H1 (cell line): ENCODE measurements at regions of chr20 and their contacts with region 1.

Region 1: DNA sequence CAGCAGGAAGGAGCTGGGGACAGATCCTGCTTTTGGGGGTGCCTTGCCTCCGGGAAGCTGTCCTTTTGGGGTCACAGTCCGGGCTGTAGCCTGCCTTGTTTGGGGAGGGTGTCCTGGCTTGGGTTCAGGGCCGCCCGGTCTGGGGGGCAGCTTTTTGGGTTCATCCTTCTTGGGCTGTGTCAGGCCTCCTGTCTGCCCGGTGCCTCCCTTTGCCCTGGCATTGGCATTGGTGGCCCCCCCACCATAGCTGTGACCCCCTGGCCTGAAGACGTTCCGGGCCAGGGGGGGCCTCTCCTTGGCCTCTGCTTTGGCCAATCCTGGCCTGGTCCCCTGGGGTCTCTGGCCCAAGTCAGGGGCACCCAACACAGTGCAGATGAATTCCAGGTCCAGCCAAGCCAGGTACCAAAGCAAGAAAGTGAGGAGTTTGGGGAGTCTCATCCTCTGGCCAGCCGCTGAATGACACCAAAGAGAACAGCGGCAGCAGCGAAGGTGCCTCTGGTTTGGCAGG is 483 bp downstream of the GDF5 start:
- DNase-seq: no peak
- H3K4me3 ChIP-seq: no peak overlapping the region
- H3K27ac ChIP-seq: no peak overlapping the region
- H3K4me1 ChIP-seq: peaks cover 5 to 21% (median 12%) of the 10 kb centered on the region in 4 experiments
- H3K27me3 ChIP-seq: no peaks in the 10 kb centered on the region
- CTCF ChIP-seq: no peak
- EP300 ChIP-seq: no peak
- POLR2A ChIP-seq: no peak
- RAD21 ChIP-seq: no peak

Region 2: GRCh38 chr20:35359335-35359950 is 78.1 kb before region 1 on chr20:
- CTCF ChIA-PET with region 1: interaction called, 14 read pairs
- POLR2A ChIA-PET with region 1: no interaction called
- DNase-seq: no peak
- H3K4me3 ChIP-seq: no peak overlapping the region
- H3K27ac ChIP-seq: no peak overlapping the region
- H3K4me1 ChIP-seq: no peaks in the 10 kb centered on the region
- H3K27me3 ChIP-seq: no peaks in the 10 kb centered on the region
- CTCF ChIP-seq: no peak
- EP300 ChIP-seq: no peak
- POLR2A ChIP-seq: no peak
- RAD21 ChIP-seq: no peak

Region 3: DNA sequence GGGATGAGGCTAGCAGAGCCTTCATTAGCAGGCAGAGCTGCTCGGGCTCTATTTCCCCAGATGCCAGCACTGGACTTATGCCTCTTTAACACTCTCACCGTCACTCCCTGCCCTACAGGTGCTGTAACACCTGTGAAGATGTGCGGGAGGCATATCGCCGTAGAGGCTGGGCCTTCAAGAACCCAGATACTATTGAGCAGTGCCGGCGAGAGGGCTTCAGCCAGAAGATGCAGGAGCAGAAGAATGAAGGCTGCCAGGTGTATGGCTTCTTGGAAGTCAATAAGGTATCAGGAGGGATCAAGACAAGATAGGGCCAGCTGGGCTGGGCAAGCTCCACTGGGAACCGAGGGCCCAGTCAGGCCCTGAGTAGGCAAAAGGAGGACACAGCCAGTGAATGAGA is 110.8 kb after region 1 on chr20:
- CTCF ChIA-PET with region 1: no interaction called
- POLR2A ChIA-PET with region 1: no interaction called
- DNase-seq: no peak
- H3K4me3 ChIP-seq: no peak overlapping the region
- H3K27ac ChIP-seq: no peak overlapping the region
- H3K4me1 ChIP-seq: no peaks in the 10 kb centered on the region
- H3K27me3 ChIP-seq: no peaks in the 10 kb centered on the region
- CTCF ChIP-seq: no peak
- EP300 ChIP-seq: no peak
- POLR2A ChIP-seq: no peak
- RAD21 ChIP-seq: no peak